GM12878 (cell line): ENCODE measurements at regions of chr12 and their contacts with region 1.

Region 1: GRCh38 chr12:93008044-93008778 is 79.1 kb upstream of the EEA1 start:
- DNase-seq: no peak
- ATAC-seq: peak; percentile 92
- H3K4me3 ChIP-seq: no peak overlapping the region
- H3K27ac ChIP-seq: peak overlapping the region; percentile 45
- H3K4me1 ChIP-seq: peaks cover 36% of the 10 kb centered on the region
- H3K27me3 ChIP-seq: no peaks in the 10 kb centered on the region
- CTCF ChIP-seq: no peak
- EP300 ChIP-seq: no peak
- POLR2A ChIP-seq: no peak
- RAD21 ChIP-seq: no peak

Region 2: GRCh38 chr12:92995258-92995903 is 12.8 kb before region 1 on chr12:
- CTCF ChIA-PET with region 1: interaction called, 13 read pairs
- POLR2A ChIA-PET with region 1: interaction called, 39 read pairs
- RAD21 ChIA-PET with region 1: interaction called, 92 read pairs
- SMC1A ChIA-PET with region 1: interaction called, 420 read pairs
- in situ Hi-C with region 1: no loop called
- intact Hi-C with region 1: loop called (anchors 2 kb)
- DNase-seq: peak; percentile 87
- ATAC-seq: peak; percentile 94
- H3K4me3 ChIP-seq: peak overlapping the region; percentile 49
- H3K27ac ChIP-seq: peak overlapping the region; percentile 84
- H3K4me1 ChIP-seq: peaks cover 30% of the 10 kb centered on the region
- H3K27me3 ChIP-seq: no peaks in the 10 kb centered on the region
- CTCF ChIP-seq: no peak
- EP300 ChIP-seq: no peak
- POLR2A ChIP-seq: no peak
- RAD21 ChIP-seq: no peak

Region 3: DNA sequence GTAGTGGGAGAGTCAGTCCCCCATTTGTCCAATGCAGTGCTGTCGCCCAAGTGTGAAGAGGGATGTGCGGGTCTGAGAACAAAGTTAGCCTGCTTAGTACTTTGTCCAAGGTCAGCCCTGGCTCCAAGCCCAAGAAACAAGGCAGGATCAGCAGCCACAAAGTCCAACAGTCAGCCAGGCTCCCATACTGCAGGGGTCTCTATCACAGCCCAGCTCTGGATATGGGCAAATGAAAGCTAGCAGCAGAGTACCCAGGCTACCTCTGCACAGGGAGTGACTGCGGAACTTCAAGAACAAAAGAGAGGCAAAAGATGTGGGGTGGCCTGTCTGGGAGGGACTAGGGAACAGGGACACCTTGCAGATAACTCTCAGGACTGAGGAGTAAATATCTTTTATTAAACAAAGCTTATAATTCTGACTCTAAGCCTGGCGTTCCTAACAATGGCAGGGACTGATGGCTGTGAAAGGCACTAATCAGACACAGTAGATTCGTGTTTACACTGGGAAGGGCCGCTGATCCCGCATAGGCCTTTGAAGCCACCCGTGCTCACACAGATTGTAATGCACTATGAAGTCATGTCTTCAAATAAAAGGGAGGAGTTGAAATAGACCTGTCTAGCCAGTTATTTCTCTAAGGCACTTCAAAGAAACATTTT is 11.9 kb after region 1 on chr12:
- CTCF ChIA-PET with region 1: interaction called, 5 read pairs
- POLR2A ChIA-PET with region 1: interaction called, 6 read pairs
- RAD21 ChIA-PET with region 1: interaction called, 10 read pairs
- SMC1A ChIA-PET with region 1: interaction called, 37 read pairs
- in situ Hi-C with region 1: no loop called
- intact Hi-C with region 1: no loop called
- DNase-seq: no peak
- ATAC-seq: no peak
- H3K4me3 ChIP-seq: no peak overlapping the region
- H3K27ac ChIP-seq: no peak overlapping the region
- H3K4me1 ChIP-seq: no peaks in the 10 kb centered on the region
- H3K27me3 ChIP-seq: no peaks in the 10 kb centered on the region
- CTCF ChIP-seq: no peak
- EP300 ChIP-seq: no peak
- POLR2A ChIP-seq: no peak
- RAD21 ChIP-seq: no peak